ENCODE measurements at regions of chr7 and their contacts with region 1.

Region 1: DNA sequence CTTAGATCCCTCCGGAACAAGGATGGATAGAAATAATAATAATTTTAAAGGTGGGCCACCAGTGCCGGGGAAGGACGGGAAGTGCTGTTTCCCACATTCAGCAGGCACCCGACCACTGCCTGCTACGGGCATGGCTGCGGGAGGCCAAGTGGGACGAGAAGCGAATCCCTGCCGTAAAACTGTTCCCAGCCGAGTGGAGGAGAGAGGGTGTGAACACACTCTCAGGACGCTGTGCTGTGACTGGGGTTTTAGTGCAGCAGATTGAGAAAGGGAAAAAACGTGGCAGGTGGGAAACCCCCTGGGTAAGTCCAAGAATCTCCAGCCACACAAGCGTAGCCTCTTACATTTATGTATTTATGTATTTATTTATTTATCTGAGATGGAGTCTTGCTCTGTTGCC is 158.8 kb downstream of the DNAJB6 start:
- DNase-seq: no peak
- H3K4me3 Mint-ChIP-seq: no peak overlapping the region
- H3K27ac Mint-ChIP-seq: no peak overlapping the region
- H3K4me1 Mint-ChIP-seq: peaks cover 33% of the 10 kb centered on the region
- H3K27me3 Mint-ChIP-seq: peaks cover 20% of the 10 kb centered on the region

Region 2: DNA sequence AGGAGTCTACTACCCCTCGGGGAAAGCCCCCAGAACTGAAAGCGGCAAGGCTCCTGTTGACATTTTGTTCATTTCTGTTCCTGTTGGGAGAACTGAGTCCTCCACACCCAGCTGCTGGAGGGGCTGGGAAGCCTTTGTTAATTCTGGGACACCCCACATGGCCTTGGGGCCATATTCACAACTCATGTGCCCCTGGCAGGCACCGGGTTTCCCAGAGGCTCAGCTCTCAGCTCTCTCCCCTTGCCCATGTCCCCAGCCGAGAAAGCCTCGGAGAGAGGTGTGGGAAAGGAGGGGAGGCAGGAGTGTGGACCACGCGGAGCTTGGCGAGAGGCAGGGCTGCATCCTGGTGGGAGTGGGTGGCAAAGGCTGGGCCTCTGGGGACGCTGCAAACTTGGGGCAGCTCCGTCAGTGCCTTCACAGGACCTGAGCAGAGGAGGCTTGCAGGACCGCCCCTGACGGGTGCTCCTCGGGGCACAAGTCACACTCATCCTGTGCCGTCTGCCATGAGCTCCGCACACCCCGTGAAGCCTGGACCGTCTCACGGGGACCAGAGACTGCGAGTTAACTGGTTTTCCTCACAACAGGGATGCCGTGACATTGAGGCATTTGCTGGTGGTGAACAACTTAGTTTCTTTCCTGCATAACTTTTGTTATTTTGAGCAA is 17.9 kb before region 1 on chr7:
- intact Hi-C with region 1: loop called (anchors 2 kb)
- DNase-seq: peak; percentile 26
- H3K4me3 Mint-ChIP-seq: no peak overlapping the region
- H3K27ac Mint-ChIP-seq: peak overlapping the region; percentile 8
- H3K4me1 Mint-ChIP-seq: peaks cover 25% of the 10 kb centered on the region
- H3K27me3 Mint-ChIP-seq: no peaks in the 10 kb centered on the region

Region 3: DNA sequence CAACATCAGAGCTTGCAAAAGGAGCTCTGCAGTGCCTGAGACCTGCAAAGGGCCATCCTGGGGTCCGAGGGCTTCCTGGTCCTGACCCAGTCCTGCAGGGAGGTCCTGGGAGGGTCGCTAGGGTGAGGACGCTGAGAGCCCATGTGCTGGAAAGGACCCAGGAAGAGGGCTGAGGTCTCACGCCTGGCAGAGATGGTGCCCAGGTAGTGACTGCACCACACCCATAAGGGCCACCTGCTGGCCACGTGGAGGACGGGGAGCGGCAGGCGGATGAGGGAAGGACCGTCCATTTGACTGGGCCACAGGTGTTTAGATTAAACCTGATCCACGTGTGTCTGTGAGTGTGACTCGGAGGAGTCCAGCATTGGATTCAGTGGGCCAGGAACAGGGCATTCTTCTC is 234.0 kb after region 1 on chr7:
- intact Hi-C with region 1: no loop called
- DNase-seq: no peak
- H3K4me3 Mint-ChIP-seq: no peak overlapping the region
- H3K27ac Mint-ChIP-seq: no peak overlapping the region
- H3K4me1 Mint-ChIP-seq: no peaks in the 10 kb centered on the region
- H3K27me3 Mint-ChIP-seq: no peaks in the 10 kb centered on the region

Measured in activated T-helper 2 cell treated with anti-CD3 and anti-CD28 coated beads, Interferon-gamma antibody, Interleukin-2, Interleukin-4, amounts not matched to agents 10 μg/mL and 5 μg/mL and 100 μg/mL, durations not matched to agents 14 hours and 24 hours and 36 hours (primary cell).